CD8-positive, alpha-beta memory T cell (primary cell): ENCODE measurements at regions of chr15 and their contacts with region 1.

Region 1: DNA sequence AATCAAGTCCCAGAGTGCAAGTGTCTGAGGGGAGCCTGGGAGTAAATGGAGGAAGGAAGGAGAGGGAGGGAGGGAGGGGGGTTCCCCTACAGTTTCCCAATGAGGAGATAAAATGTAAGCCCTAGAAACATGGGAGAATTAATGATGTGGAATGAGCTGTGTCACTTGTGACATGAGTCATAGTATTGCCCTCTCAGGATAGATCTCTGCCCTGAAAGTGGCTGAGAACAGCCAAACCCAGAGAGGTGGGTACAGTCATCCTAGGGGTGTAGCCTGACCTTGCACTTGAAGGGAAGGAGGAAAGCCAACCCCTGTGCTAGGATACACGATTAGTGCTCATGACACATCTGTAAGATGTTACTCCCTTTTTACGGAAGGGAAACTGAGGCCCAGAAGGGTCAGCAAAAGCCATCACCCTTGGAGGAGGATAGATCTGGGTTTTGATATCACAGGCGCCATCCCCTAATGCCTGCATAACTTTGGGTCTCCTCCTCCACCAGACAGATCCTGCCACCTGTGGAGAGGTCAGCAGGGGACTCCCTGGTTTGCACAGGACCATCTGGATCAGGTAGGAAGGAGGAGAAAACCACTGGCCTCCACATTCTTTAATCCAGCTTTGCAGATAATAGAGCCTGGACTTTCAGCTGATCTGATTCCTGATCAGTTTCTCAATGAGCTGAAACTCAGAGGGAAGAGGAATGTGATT is 23.1 kb upstream of the USP3 start:
- DNase-seq: no peak
- H3K4me3 ChIP-seq: no peak overlapping the region
- H3K4me3 Mint-ChIP-seq: peak overlapping the region in 2 of 7 donors; percentile 10 to 72
- H3K27ac ChIP-seq: no peak overlapping the region
- H3K27ac Mint-ChIP-seq: peak overlapping the region; percentile 90 to 100 (median 99)
- H3K4me1 ChIP-seq: peaks cover 80% of the 10 kb centered on the region
- H3K4me1 Mint-ChIP-seq: peaks cover 54 to 76% (median 75%) of the 10 kb centered on the region in 3 donors
- H3K27me3 ChIP-seq: no peaks in the 10 kb centered on the region
- H3K27me3 Mint-ChIP-seq: no peaks in the 10 kb centered on the region

Region 2: DNA sequence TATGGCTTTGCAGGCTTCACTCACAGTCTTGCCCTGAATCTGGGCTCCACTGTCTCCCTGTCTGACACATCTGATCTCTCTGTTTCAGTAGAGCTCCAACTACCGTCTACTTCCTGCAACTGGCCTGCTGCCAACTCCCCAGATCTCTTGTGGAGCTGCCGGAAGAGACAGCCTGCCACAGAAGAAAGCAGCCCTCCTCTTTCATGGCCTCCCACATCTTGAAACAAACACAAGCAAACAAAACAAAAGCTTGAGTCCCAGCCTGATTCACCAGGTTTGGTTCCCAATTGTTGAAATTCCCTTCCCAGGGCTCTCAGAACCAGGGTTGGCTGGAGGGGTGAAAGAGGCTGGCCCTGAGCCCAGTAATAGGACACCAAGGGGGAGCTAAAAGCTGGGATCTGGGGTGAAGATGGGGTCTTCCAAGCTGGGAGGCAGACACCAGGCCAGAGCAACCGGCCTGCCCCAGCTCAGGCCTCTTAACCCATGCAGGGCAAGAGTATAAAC is 44.3 kb before region 1 on chr15:
- CTCF ChIA-PET with region 1: no interaction called
- POLR2A ChIA-PET with region 1: no interaction called
- DNase-seq: peak; percentile 33 to 85 (median 55)
- H3K4me3 ChIP-seq: no peak overlapping the region
- H3K4me3 Mint-ChIP-seq: peak overlapping the region in 4 of 7 donors; percentile 36 to 48 (median 44)
- H3K27ac ChIP-seq: no peak overlapping the region
- H3K27ac Mint-ChIP-seq: peak overlapping the region; percentile 14 to 91 (median 72)
- H3K4me1 ChIP-seq: peaks cover 29% of the 10 kb centered on the region
- H3K4me1 Mint-ChIP-seq: peaks cover 11 to 33% (median 27%) of the 10 kb centered on the region in 3 donors
- H3K27me3 ChIP-seq: no peaks in the 10 kb centered on the region
- H3K27me3 Mint-ChIP-seq: peaks cover 8 to 19% of the 10 kb centered on the region in 2 donors

Region 3: DNA sequence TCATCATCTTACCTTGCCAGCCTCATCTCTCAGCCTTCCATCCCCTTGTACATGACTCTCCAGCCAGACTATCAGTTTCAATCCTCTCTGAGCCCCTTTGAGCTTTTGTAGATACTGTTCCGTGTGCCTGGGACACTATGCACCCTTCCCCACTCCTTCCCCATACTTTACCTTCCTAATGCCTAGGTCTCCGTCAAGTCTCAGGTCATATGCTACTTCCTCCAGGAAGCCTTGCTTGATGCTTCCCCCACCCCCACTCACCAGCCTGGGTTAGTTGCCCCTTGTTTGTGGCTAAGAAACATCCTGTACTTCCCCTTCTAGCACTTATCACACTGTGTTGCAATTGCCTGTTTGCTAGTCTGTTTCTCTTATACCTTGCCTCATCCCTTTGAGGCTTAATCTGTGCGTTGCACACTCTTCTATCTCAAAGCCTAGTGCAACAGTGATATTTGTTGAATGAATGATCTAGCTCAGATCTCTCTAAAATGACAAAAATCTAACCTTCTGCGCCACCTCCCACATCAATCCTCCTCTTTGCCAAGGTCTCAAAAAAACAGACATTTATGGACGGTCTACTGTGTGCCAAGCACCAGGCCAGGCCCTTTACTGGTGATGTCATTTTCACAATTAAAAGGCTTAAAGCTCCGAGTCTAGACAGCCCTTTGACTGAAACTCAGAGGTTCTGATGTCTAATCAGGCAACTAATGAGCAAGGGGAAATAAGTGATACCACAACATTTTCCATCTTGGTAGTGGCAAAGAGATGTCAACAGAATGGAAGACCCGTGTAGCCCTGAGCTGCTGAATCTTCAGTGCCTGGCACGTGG is 16.6 kb after region 1 on chr15:
- CTCF ChIA-PET with region 1: interaction called, 10 read pairs
- POLR2A ChIA-PET with region 1: interaction called, 29 read pairs
- DNase-seq: peak; percentile 69 to 91 (median 85)
- H3K4me3 ChIP-seq: peak overlapping the region; percentile 23
- H3K4me3 Mint-ChIP-seq: no peak overlapping the region
- H3K27ac ChIP-seq: peak overlapping the region; percentile 55
- H3K27ac Mint-ChIP-seq: no peak overlapping the region
- H3K4me1 ChIP-seq: peaks cover 95% of the 10 kb centered on the region
- H3K4me1 Mint-ChIP-seq: peaks cover 59 to 76% (median 76%) of the 10 kb centered on the region in 3 donors
- H3K27me3 ChIP-seq: no peaks in the 10 kb centered on the region
- H3K27me3 Mint-ChIP-seq: no peaks in the 10 kb centered on the region

Region 4: DNA sequence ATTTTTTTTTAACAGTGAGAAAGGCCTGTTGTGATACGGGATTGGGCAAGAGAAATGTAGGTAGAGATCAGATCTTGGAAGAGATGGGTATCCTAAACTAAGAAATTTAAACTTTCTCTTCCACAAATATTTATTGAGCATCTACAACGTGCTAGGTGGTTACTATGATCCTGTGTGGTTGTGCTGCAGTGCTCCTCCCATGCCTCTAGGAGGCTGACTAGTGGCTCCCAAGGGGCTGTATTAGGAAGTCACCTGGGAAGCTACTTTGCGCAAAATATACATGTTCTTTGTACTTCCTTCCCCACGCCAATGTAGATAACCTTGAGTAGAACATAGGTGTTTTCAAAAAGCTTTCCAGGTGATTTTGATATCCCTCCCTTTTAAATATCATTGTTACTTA is 50.3 kb after region 1 on chr15:
- CTCF ChIA-PET with region 1: no interaction called
- POLR2A ChIA-PET with region 1: no interaction called
- DNase-seq: no peak
- H3K4me3 ChIP-seq: no peak overlapping the region
- H3K4me3 Mint-ChIP-seq: no peak overlapping the region
- H3K27ac ChIP-seq: no peak overlapping the region
- H3K27ac Mint-ChIP-seq: peak overlapping the region in 7 of 8 donors; percentile 12 to 55 (median 47)
- H3K4me1 ChIP-seq: peaks cover 66% of the 10 kb centered on the region
- H3K4me1 Mint-ChIP-seq: peaks cover 90 to 96% (median 95%) of the 10 kb centered on the region in 3 donors
- H3K27me3 ChIP-seq: no peaks in the 10 kb centered on the region
- H3K27me3 Mint-ChIP-seq: no peaks in the 10 kb centered on the region